ENCODE measurements at regions of chr19 and their contacts with region 1.

Region 1: DNA sequence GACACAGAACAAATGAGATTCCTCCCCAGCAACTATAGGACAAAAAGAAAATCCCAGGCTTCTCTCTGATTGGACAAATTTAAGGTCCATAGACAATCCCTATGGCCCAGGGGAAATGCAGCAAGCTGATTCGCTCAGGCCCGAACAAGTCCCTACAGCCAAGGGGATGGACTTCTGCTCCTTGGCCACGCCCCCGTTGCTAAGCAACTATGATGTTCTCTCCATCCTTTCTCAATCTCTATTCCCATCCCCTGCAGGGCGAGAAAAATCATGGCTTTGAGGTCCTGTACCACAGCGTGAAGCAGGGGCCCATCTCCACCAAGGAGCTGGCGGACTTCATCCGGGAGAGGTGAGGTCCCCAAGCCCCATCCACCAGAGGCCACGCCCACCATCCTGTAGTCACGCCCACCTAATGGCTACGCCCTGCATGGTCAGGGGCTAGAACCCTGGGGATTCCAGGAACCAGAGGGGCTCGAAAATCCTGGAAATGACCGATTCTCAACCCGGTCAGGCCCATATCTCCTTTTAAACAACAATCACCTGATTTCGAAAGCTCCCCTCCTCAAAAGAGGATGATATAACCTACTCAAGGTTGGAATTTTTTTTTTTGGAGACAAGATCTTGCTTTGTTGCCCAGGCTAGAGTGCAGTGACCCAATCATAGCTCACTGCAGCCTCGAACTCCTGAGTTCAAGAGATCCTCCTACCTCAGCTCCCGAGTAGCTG is 11.4 kb downstream of the FCHO1 start:
- DNase-seq: peak; percentile 83 to 90 (median 86)
- ATAC-seq: peak; percentile 97
- H3K4me3 ChIP-seq: no peak overlapping the region
- H3K27ac ChIP-seq: no peak overlapping the region
- H3K4me1 ChIP-seq: peaks cover 0 to 5% of the 10 kb centered on the region in 2 experiments; a peak in 3 of 5 replicates
- H3K27me3 ChIP-seq: no peaks in the 10 kb centered on the region
- CTCF ChIP-seq: no peak
- EP300 ChIP-seq: no peak
- POLR2A ChIP-seq: no peak
- RAD21 ChIP-seq: no peak

Region 2: GRCh38 chr19:17747205-17748098 is 15.2 kb before region 1 on chr19:
- CTCF ChIA-PET with region 1: no interaction called
- POLR2A ChIA-PET with region 1: interaction called, 12 read pairs
- in situ Hi-C with region 1: no loop called
- intact Hi-C with region 1: no loop called
- DNase-seq: peak; percentile 97 to 99 (median 98)
- ATAC-seq: peak; percentile 93
- H3K4me3 ChIP-seq: peak overlapping the region; percentile 54
- H3K27ac ChIP-seq: peak overlapping the region; percentile 32; the same call in 2 of the 3 replicates
- H3K4me1 ChIP-seq: peaks cover 28 to 52% of the 10 kb centered on the region in 2 experiments
- H3K27me3 ChIP-seq: no peaks in the 10 kb centered on the region
- CTCF ChIP-seq: no peak
- EP300 ChIP-seq: no peak
- POLR2A ChIP-seq: no peak
- RAD21 ChIP-seq: no peak

Measured in K562 (cell line).